Activated CD4-positive, alpha-beta T cell treated with anti-CD3 and anti-CD28 coated beads, Interleukin-2, amount 10 ng/mL, durations not matched to agents 24 days and 14 days (primary cell): ENCODE measurements at regions of chr4 and their contacts with region 1.

Region 1: DNA sequence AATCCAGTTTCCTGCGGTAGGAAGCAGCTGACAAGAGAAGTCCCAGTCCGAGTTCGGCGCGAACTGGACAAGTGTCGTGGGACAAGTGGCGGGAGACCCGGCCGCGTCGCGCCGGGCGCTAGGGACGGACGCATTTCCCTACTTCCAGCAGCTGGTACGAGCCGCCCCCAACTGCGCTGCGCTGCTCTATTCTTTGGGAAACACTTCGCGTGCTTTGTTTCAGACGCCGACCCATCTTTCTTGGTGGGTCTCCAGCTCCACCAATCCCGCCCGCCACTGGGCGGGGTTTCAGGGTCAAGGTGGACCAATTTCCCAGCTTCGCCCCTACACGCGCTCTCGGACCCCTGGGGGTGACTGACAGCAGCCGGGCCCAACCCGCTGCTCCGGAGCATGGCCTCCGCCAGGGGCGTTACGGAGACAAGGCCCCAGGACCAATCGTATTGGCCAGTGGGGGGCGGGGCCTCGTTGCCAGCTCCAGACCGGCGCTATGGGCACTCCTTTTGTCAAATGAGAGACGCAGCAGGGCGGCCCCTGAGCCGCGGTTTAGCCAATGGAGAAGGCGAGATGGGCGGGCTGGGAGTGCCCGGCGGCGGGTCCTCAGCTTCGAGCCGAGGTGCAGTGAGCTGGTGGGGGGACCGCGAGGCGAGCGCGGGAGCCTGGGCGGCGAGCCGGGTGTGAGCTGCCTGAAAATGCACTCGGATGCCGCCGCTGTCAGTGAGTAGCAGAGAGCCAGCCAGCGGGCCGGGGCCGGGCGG is at the start of gene DCUN1D4:
- DNase-seq: peak; percentile 99
- H3K4me3 Mint-ChIP-seq: peak within 1 kb of the TSS; percentile 94
- H3K27ac Mint-ChIP-seq: peak within 1 kb of the TSS; percentile 98
- H3K4me1 Mint-ChIP-seq: peaks cover 18% of the 10 kb centered on the region
- H3K27me3 Mint-ChIP-seq: peaks cover 8% of the 10 kb centered on the region
- total RNA-seq, gene DCUN1D4: 33.5 and 34.3 TPM in 2 replicates

Region 2: GRCh38 chr4:51895813-51896408 is 53.2 kb after region 1 on chr4:
- intact Hi-C with region 1: loop called (anchors 2 kb)
- DNase-seq: peak; percentile 86
- H3K4me3 Mint-ChIP-seq: no peak overlapping the region
- H3K27ac Mint-ChIP-seq: peak overlapping the region; percentile 64
- H3K4me1 Mint-ChIP-seq: peaks cover 16% of the 10 kb centered on the region
- H3K27me3 Mint-ChIP-seq: no peaks in the 10 kb centered on the region

Region 3: GRCh38 chr4:52038103-52038912 is 195.6 kb after region 1 on chr4 and contains the start of gene SGCB:
- intact Hi-C with region 1: loop called (anchors 2 kb)
- DNase-seq: peak; percentile 93
- H3K4me3 Mint-ChIP-seq: peak within 1 kb of the TSS; percentile 85
- H3K27ac Mint-ChIP-seq: peak within 1 kb of the TSS; percentile 68
- H3K4me1 Mint-ChIP-seq: peaks cover 23% of the 10 kb centered on the region
- H3K27me3 Mint-ChIP-seq: peaks cover 32% of the 10 kb centered on the region
- total RNA-seq, gene SGCB: 12.2 and 14.6 TPM in 2 replicates

Region 4: GRCh38 chr4:52712172-52712990 is 869.6 kb after region 1 on chr4:
- intact Hi-C with region 1: loop called (anchors 1 kb)
- DNase-seq: peak; percentile 99
- H3K4me3 Mint-ChIP-seq: peak overlapping the region; percentile 98
- H3K27ac Mint-ChIP-seq: peak overlapping the region; percentile 99
- H3K4me1 Mint-ChIP-seq: peaks cover 48% of the 10 kb centered on the region
- H3K27me3 Mint-ChIP-seq: no peaks in the 10 kb centered on the region

Region 5: GRCh38 chr4:53365486-53366300 is 1523.0 kb after region 1 on chr4 and contains the start of gene SCFD2:
- intact Hi-C with region 1: loop called (anchors 5 kb)
- DNase-seq: peak; percentile 99
- H3K4me3 Mint-ChIP-seq: peak within 1 kb of the TSS; percentile 98
- H3K27ac Mint-ChIP-seq: peak within 1 kb of the TSS; percentile 95
- H3K4me1 Mint-ChIP-seq: peaks cover 33% of the 10 kb centered on the region
- H3K27me3 Mint-ChIP-seq: peaks cover 15% of the 10 kb centered on the region
- total RNA-seq, gene SCFD2: 35.0 and 39.9 TPM in 2 replicates